Colonic mucosa (tissue), 4 donors: ENCODE measurements at regions of chr16 and their contacts with region 1.

Region 1: DNA sequence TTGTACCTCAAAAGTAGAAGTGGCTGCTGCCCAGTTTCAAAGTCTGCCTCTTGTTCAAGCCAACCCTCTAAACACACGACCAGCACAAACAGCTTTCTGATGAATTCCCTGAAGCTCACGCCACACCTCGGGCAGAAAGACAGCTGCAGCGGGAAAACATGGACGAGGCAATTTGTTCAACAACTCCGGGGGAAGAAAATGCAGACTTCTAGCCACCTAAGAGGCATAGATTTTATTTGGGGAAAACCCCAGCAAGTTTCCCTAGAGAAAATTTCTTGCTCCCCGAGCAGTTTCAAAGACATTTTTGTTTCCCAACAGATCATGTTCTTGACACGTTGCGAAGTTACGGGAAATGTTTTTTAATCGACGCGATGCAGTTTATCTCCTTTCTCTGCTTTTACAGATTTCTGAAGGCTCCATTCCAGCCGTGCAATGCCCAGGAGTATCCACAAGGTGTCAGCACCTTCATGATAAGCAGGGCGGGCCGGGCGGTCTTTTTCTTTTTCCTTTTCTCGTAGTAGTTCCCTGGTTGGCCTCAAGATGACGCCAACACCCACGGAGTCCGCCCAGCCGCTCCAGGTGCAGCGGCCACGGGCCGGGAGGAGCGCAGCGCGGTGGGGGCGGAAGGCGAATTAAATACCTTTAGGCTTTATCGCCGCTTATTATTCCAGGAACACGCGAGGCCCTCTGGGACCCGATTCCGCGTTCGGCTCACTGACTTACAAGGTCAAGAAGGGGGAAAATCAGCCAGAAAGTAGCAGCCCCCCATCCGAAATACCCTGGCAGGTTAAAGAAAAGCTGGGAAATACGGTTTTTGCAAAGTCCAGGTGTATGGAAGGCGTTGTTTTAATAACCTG is 2.9 kb upstream of the FOXC2 start:
- DNase-seq: peak; percentile 91
- H3K4me3 ChIP-seq: no peak overlapping the region
- H3K27ac ChIP-seq: no peak overlapping the region
- H3K4me1 ChIP-seq: no peaks in the 10 kb centered on the region
- H3K27me3 ChIP-seq: peaks cover 46% of the 10 kb centered on the region
- CTCF ChIP-seq: peak; percentile 100

Region 2: DNA sequence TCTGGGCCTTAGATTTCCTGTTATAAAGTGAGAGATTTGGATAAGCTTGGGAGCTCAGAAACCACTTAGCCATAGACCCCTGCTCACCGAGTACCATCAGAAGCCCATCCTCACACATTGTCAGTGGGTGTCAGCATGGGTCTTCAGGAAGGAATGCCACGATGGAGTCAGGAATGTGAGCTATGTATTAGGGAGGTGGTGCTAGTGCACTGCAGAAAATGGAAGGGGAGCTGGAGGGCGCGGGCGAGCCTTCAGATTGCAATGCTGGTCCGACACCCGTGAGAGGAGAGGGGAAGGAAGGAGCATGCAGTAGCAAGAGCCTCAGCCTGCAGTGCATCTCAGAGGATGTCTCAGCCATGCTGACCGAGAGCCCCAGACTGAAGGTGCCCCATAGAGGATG is 309.1 kb after region 1 on chr16:
- intact Hi-C with region 1: loop called (anchors 2 kb)
- DNase-seq: no peak
- H3K4me3 ChIP-seq: no peak overlapping the region
- H3K27ac ChIP-seq: no peak overlapping the region
- H3K4me1 ChIP-seq: no peaks in the 10 kb centered on the region
- H3K27me3 ChIP-seq: no peaks in the 10 kb centered on the region
- CTCF ChIP-seq: no peak

Region 3: GRCh38 chr16:87062569-87063442 is 499.1 kb after region 1 on chr16:
- intact Hi-C with region 1: loop called (anchors 2 kb)
- DNase-seq: peak; percentile 61
- H3K4me3 ChIP-seq: no peak overlapping the region
- H3K27ac ChIP-seq: no peak overlapping the region
- H3K4me1 ChIP-seq: no peaks in the 10 kb centered on the region
- H3K27me3 ChIP-seq: no peaks in the 10 kb centered on the region
- CTCF ChIP-seq: peak; percentile 72

Region 4: DNA sequence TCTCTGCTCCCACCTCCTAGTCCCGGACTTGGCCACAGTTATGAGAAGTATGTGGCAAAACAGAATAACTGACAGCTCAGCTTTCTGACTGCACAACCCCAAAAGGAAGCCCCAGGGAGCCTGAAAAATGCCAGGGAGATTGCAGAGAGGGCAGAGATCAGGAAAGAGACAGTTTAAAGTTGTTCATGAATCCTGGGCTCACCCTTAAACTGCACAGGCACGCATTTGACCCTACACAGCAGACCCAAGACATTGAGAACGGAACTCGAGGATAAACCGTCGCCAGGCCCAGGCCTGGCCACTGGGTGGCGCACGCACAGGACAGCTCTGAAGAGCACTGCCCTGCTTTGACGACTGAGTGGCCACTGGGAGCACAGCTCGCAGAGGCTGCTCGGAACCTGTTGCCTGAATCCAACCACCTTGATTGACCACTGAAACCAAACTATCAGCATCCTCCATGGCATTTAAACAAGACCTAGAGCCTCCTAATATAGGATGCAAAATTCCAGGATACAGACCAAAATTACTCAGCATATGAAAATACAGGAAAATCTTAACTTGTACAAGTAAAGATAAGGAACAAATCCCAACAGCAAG is 639.4 kb after region 1 on chr16:
- intact Hi-C with region 1: loop called (anchors 10 kb)
- DNase-seq: peak; percentile 67
- H3K4me3 ChIP-seq: no peak overlapping the region
- H3K27ac ChIP-seq: no peak overlapping the region
- H3K4me1 ChIP-seq: no peaks in the 10 kb centered on the region
- H3K27me3 ChIP-seq: no peaks in the 10 kb centered on the region
- CTCF ChIP-seq: peak; percentile 70

Region 5: DNA sequence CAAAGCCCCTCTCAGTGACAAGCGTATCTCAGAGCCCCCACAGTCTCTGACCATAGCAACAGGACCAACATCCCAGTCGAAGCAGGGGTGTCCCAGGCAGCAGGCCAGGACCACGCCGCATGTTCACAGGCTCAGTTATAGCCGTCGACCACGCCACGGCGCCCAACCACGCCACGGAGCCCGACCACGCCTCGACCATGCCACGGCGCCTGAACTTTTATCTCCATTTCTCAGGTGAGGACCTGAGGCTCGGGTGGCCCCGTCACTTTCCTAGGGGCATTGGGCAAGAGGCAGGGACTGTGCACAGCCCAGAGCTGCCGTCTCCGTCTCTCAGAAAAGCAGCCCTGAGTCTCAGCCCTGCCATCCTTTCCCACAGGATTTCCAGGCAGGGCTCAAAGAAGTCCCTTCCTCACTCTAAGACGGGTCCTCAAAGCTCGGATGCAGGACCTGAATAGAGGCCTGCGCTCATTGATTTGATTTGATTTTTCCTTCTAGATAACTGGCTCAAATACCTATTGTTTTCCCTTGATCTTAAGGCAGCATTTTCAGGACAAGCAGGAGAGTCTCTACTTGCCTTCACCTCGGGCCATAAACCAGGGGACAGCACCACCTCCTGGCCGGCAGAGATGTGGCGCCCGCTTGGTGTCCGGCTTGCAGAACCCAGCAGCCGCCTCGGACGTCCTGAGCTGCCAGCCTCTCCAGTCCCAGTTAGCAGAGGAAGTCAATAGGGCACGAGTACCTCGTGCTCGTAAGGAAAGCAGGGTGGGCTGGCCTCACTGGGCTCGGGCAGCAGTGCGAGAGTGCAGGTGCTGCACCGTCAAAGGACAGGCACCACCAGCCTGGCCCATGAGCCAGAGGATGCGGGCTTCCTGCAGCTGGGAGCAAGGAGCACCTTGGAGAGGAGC is 714.7 kb after region 1 on chr16:
- intact Hi-C with region 1: loop called (anchors 5 kb)
- DNase-seq: peak; percentile 77
- H3K4me3 ChIP-seq: no peak overlapping the region
- H3K27ac ChIP-seq: no peak overlapping the region
- H3K4me1 ChIP-seq: no peaks in the 10 kb centered on the region
- H3K27me3 ChIP-seq: no peaks in the 10 kb centered on the region
- CTCF ChIP-seq: peak; percentile 81